ENCODE measurements at regions of chr1 and their contacts with region 1.

Region 1: DNA sequence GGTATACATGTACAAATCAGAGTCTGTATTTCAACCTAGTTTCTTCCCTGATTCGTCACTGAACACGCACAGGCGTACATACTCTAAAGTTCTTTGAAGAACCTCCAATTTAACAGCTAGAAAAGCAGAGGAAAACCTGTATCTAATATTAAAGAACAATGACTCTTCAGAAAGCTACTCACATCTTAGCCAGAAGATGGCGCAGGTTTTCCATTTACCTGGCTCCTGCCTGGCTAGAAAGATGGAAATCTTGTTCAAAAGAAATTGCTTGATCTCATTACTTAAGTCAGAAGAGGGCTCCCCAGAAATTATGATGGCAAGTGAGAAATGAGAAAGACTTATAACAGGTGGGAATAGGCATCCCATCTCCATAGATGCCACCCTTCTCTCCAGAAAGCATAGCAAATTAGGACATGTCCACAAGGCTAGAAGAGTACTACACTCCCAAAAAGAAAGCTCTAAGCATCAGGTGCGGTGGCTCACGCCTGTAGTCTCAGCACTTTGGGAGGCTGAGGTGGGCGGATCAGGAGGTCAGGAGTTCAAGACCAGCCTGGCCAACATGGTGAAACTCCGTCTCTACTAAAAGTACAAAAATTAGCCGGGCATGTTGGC is 19.0 kb upstream of the L1TD1 start:
- DNase-seq: peak; percentile 64

Region 2: DNA sequence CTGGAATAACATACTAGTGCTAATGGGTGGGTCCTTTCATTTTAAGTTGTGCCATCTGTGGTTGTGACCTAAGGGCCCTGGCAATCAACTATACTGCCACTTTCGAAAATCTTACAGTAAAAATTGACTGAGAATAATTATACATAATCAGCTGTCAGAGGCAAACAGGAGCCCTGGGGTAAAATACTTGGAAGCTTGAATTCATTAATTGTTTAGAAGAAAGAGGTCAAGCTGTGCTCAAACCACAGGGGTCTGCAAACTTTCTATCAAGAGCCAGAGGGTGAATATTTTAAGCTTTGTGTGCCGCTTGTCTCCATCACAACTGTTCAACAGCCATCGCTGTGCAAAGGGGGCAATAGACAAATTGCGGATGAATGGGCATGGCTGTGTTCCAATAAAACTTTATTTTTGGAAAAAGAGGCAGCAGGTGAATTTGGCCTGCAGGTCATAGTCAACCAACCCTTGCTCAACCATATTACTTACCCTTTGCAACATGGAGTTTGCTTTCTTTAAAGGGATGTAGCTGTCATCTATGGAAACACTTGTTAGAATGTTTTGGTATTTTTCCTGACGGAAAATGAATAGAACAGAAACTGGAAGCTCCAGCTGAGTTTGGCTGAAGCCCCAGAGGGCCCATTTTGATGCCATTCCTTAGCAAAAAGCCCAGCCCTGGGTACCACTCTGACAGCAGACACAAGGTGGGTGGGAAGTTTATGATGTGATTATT is 225.5 kb after region 1 on chr1:
- CTCF ChIA-PET with region 1: interaction called, 10 read pairs
- POLR2A ChIA-PET with region 1: no interaction called
- DNase-seq: no peak

Measured in HEK293T (cell line).